OCI-LY7 (cell line): ENCODE measurements at regions of chr2 and their contacts with region 1.

Region 1: DNA sequence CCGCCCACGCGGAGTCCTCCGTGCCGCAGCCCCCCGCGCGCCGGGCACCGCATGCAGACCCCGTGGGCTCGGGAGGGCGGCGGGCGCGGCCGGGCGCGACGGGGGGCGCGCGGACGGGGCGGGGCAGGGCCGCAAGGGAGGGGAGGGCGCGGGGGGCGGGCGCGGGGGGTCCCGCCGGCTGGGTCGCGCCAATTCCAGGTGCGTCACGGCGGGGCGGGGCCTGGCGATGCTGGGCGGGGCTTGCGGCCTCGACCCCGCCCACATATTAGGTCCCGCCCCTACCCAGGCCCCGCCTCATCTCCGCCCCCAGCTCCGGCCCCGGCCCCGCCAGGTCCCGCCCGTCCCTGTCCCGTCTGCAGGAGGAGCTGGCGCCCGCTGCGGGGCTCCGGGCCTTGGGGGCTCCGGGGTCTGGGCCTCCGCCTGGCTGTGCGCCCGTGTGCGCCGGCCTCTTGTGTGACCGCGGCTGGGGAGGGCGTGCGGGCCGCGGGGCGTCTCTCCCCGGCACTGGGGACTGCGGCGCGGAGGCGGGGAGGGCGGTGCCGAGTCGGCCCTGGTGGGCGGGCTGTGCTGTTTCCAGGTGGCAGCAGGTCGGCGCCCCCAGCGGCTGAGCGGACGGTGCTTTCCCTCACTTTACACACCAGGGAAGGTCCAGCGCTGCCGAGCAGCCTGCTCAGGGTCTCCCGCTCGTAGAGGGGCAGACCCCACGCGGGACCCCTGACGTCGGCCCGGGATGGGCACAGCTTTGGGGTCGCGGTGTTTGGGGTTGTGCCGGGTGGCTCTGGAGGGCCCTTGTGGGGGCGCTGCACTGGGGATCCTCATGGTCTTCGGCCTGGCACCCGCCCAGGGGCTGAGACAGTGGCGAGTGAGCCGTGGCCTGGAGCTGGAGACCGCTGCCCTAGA is 543 bp downstream of the ING5 start:
- DNase-seq: peak; percentile 90
- H3K4me3 ChIP-seq: peak overlapping the region; percentile 94
- H3K27ac ChIP-seq: peak overlapping the region; percentile 92
- H3K4me1 ChIP-seq: peaks cover 23% of the 10 kb centered on the region
- CTCF ChIP-seq: peak; percentile 78

Region 2: GRCh38 chr2:240560480-240561326 is 1141.7 kb before region 1 on chr2:
- CTCF ChIA-PET with region 1: no interaction called
- POLR2A ChIA-PET with region 1: no interaction called
- intact Hi-C with region 1: loop called (anchors 5 kb)
- DNase-seq: peak; percentile 98
- H3K4me3 ChIP-seq: peak overlapping the region; percentile 91
- H3K27ac ChIP-seq: peak overlapping the region; percentile 86
- H3K4me1 ChIP-seq: peaks cover 60% of the 10 kb centered on the region
- CTCF ChIP-seq: no peak

Region 3: GRCh38 chr2:241315093-241315878 is 387.1 kb before region 1 on chr2 and contains the start of gene HDLBP:
- CTCF ChIA-PET with region 1: no interaction called
- POLR2A ChIA-PET with region 1: no interaction called
- intact Hi-C with region 1: loop called (anchors 5 kb)
- DNase-seq: peak; percentile 99
- H3K4me3 ChIP-seq: peak within 1 kb of the TSS; percentile 96
- H3K27ac ChIP-seq: peak within 1 kb of the TSS; percentile 87
- H3K4me1 ChIP-seq: peaks cover 68% of the 10 kb centered on the region
- CTCF ChIP-seq: peak; percentile 79
- total RNA-seq, gene HDLBP: 155 and 176 TPM in 2 replicates

Region 4: GRCh38 chr2:241686649-241687425 is 15.5 kb before region 1 on chr2 and contains the start of gene DTYMK:
- CTCF ChIA-PET with region 1: no interaction called
- POLR2A ChIA-PET with region 1: interaction called, 46 read pairs
- intact Hi-C with region 1: loop called (anchors 1 kb)
- DNase-seq: peak; percentile 96
- H3K4me3 ChIP-seq: peak within 1 kb of the TSS; percentile 90
- H3K27ac ChIP-seq: peak within 1 kb of the TSS; percentile 69
- H3K4me1 ChIP-seq: peaks cover 17% of the 10 kb centered on the region
- CTCF ChIP-seq: no peak
- total RNA-seq, gene DTYMK: 104 and 118 TPM in 2 replicates

Region 5: DNA sequence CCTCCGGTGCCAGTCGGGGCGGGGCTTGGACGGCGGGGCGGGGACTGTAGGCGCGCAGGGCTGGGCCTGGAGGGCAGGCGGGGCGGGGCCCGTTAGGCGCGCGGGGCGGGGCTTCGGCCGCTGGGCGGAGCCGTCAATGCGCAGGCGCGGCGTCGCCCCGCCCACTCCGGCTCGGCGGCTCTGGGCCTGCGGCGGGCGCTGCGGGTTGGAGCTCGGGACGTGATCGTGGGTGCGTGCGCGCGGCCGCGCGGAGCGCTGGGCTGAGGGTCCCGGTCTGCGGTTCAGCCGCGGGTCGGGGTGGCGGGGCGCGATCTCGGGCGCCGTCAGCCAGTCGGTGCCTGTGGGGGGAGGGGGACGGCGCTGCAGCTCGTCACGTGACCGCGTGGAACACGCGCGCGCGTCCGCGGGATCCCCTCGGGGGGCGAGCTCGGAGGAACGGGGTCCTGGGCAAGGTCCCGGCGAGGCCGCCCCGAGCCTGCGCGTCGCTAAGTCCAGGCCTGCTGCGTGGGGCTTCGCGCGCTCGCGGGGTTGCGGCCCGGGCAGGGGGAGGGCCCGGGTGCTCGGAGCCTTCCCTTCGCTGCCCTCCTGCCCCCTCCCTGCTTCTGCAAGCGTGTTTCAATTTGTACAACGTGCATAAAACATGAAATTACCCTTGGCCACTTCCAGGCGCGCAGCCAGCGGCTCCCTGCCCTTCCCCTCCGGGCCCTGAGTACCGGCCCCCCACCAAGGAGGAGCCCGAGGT is 32.3 kb after region 1 on chr2 and contains the start of gene D2HGDH:
- CTCF ChIA-PET with region 1: interaction called, 3 read pairs
- POLR2A ChIA-PET with region 1: interaction called, 8 read pairs
- intact Hi-C with region 1: loop called (anchors 1 kb)
- DNase-seq: peak; percentile 90
- H3K4me3 ChIP-seq: peak within 1 kb of the TSS; percentile 81
- H3K27ac ChIP-seq: peak within 1 kb of the TSS; percentile 48
- H3K4me1 ChIP-seq: peaks cover 22% of the 10 kb centered on the region
- CTCF ChIP-seq: no peak
- total RNA-seq, gene D2HGDH: 19.4 and 23.2 TPM in 2 replicates

Region 6: DNA sequence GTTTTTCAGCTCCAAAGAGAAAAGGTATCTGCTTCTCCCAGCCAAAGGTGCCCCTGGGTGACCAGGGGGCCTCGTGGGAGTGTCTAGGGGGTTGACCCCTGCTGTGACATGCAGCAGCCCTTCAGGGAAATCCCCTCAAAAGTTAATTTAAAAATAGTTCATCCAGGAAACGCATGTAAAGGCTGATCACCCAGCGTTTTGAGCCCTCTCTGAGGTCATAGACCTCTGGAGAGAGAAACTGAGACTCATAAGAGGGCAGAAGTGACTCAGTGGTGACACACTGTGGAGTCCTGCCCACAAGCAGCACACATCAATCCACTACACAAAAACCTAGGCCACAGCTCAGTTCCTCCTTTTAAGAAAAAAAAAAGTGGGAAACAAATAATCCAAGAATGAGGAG is 86.2 kb after region 1 on chr2:
- CTCF ChIA-PET with region 1: no interaction called
- POLR2A ChIA-PET with region 1: no interaction called
- intact Hi-C with region 1: no loop called
- DNase-seq: peak; percentile 23
- H3K4me3 ChIP-seq: no peak overlapping the region
- H3K27ac ChIP-seq: no peak overlapping the region
- H3K4me1 ChIP-seq: peaks cover 10% of the 10 kb centered on the region
- CTCF ChIP-seq: 0 out of 2 replicates have a peak, but pooled peaks have one; percentile 20

Region 7: DNA sequence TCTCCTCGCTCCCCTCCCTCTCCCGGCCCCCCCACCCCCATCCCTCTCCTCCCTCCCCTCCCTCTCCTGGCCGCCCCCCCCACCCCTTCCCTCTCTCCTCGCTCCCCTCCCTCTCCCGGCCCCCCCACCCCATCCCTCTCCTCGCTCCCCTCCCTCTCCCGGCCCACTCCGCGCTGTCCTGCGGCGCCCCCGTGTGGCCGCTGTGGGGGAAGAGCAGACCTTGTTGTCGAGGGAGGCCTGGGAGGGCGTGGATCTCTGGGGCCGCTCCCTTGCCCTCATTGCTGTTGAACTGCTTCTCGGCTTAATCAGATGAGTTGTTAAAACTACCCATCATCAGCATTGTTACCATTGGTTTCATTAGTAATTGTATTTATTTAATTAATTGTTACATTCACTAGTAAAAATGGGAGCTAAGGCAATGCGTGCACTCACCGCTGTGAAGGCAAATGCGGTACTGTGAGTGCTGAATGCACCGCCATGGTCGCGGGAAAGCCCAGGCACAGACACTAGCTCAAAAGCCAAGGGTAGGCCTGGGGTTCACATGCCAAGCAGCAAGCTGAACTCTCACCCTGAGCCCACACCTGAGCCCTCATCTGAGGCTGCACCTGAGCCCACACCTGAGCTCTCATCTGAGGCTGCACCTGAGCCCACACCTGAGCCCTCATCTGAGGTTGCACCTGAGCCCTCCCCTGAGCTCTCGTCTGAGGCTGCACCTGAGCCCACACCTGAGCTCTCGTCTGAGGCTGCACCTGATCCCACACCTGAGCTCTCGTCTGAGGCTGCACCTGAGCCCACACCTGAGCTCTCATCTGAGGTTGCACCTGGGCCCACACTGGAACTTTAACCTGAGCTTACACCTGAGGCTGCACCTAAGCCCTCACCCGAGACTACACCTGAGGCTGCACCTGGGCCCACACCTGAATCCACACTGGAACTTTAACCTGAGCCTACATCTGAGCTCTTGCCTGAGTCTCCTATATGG is 175.9 kb after region 1 on chr2:
- CTCF ChIA-PET with region 1: interaction called, 15 read pairs
- POLR2A ChIA-PET with region 1: no interaction called
- intact Hi-C with region 1: loop called (anchors 2 kb)
- DNase-seq: peak; percentile 65
- H3K4me3 ChIP-seq: no peak overlapping the region
- H3K27ac ChIP-seq: no peak overlapping the region
- H3K4me1 ChIP-seq: peaks cover 23% of the 10 kb centered on the region
- CTCF ChIP-seq: peak; percentile 70